ENCODE measurements at regions of chr14 and their contacts with region 1.

Region 1: GRCh38 chr14:23631702-23632460 is 4.3 kb upstream of the DHRS2 start:
- DNase-seq: peak; percentile 81
- H3K4me3 ChIP-seq: no peak overlapping the region
- H3K27ac ChIP-seq: no peak overlapping the region
- H3K4me1 ChIP-seq: no peaks in the 10 kb centered on the region
- H3K27me3 ChIP-seq: peaks cover 0 to 3% of the 10 kb centered on the region in 2 experiments
- CTCF ChIP-seq: peak; percentile 94 to 97
- POLR2A ChIP-seq: no peak

Region 2: GRCh38 chr14:23605931-23606585 is 25.8 kb before region 1 on chr14:
- CTCF ChIA-PET with region 1: interaction called, 20 read pairs
- POLR2A ChIA-PET with region 1: no interaction called
- dilution Hi-C with region 1: no loop called
- intact Hi-C with region 1: no loop called
- DNase-seq: no peak
- H3K4me3 ChIP-seq: no peak overlapping the region
- H3K27ac ChIP-seq: no peak overlapping the region
- H3K4me1 ChIP-seq: no peaks in the 10 kb centered on the region
- H3K27me3 ChIP-seq: no peaks in the 10 kb centered on the region
- CTCF ChIP-seq: no peak
- POLR2A ChIP-seq: no peak

Region 3: GRCh38 chr14:23646648-23647549 is 15.0 kb after region 1 on chr14:
- CTCF ChIA-PET with region 1: interaction called, 31 read pairs
- POLR2A ChIA-PET with region 1: no interaction called
- dilution Hi-C with region 1: no loop called
- intact Hi-C with region 1: no loop called
- DNase-seq: no peak
- H3K4me3 ChIP-seq: no peak overlapping the region
- H3K27ac ChIP-seq: no peak overlapping the region
- H3K4me1 ChIP-seq: no peaks in the 10 kb centered on the region
- H3K27me3 ChIP-seq: no peaks in the 10 kb centered on the region
- CTCF ChIP-seq: no peak
- POLR2A ChIP-seq: no peak

Region 4: DNA sequence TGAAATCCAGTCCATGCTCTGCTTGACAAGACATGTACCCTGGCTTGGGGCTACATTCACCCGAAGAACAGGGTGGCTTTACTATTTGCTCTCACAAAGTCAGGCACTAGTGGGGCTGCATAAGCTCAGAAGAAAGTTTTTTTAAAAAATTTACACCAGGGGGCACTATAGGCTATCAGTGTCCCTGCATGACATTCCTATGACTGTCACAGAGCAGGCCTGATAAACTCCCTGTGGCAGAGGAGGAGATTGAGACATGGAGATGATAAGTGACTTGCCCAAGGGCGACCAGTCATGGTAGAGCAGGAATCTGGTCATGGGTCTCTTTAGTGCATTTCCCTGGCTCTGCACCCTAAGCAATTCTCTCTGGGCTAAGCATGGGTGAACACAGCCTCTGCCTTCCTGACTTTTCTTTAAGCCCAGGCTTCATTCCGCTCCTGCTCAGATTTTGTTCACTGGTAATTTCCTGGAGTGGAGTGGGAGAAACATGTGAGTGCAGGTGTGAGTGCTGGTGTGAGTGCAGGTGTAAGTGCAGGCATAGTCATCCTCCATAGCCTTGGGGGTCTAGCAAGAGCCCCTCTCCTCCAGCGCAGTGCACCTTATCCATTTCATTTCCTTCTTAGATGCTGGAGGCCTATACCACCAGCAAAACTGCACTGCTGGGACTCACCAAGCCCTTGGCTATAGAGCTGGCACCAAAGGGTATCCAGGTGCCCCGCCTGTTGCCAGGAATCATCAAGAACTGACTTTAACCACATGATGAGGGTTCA is 95.9 kb after region 1 on chr14:
- CTCF ChIA-PET with region 1: interaction called, 10 read pairs
- POLR2A ChIA-PET with region 1: no interaction called
- dilution Hi-C with region 1: no loop called
- intact Hi-C with region 1: no loop called
- DNase-seq: peak; percentile 37
- H3K4me3 ChIP-seq: no peak overlapping the region
- H3K27ac ChIP-seq: no peak overlapping the region
- H3K4me1 ChIP-seq: no peaks in the 10 kb centered on the region
- H3K27me3 ChIP-seq: no peaks in the 10 kb centered on the region
- CTCF ChIP-seq: peak; percentile 27 to 32
- POLR2A ChIP-seq: no peak

Region 5: GRCh38 chr14:23929822-23930294 is 298.0 kb after region 1 on chr14:
- CTCF ChIA-PET with region 1: interaction called, 60 read pairs
- POLR2A ChIA-PET with region 1: no interaction called
- dilution Hi-C with region 1: no loop called
- intact Hi-C with region 1: loop called (anchors 1 kb)
- DNase-seq: peak; percentile 74
- H3K4me3 ChIP-seq: no peak overlapping the region
- H3K27ac ChIP-seq: no peak overlapping the region
- H3K4me1 ChIP-seq: no peaks in the 10 kb centered on the region
- H3K27me3 ChIP-seq: peaks cover 0 to 5% of the 10 kb centered on the region in 2 experiments
- CTCF ChIP-seq: peak; percentile 93
- POLR2A ChIP-seq: no peak